ENCODE measurements at regions of chr20 and their contacts with region 1.

Region 1: GRCh38 chr20:62065669-62066338 is at the start of gene TAF4:
- DNase-seq: peak in 1 of 2 experiments; percentile 78
- H3K4me3 ChIP-seq: peak within 1 kb of the TSS; percentile 81
- H3K27ac ChIP-seq: no peak within 1 kb of the TSS
- H3K4me1 ChIP-seq: peaks cover 16% of the 10 kb centered on the region
- H3K27me3 ChIP-seq: peaks cover 6% of the 10 kb centered on the region
- CTCF ChIP-seq: no peak
- total RNA-seq, gene TAF4: 25.8 and 32.5 TPM in 2 replicates

Region 2: GRCh38 chr20:61885759-61886715 is 179.8 kb before region 1 on chr20:
- CTCF ChIA-PET with region 1: no interaction called
- POLR2A ChIA-PET with region 1: interaction called, 18 read pairs
- intact Hi-C with region 1: no loop called
- DNase-seq: no peak
- H3K4me3 ChIP-seq: no peak overlapping the region
- H3K27ac ChIP-seq: no peak overlapping the region
- H3K4me1 ChIP-seq: no peaks in the 10 kb centered on the region
- H3K27me3 ChIP-seq: peaks cover 86% of the 10 kb centered on the region
- CTCF ChIP-seq: no peak

Region 3: DNA sequence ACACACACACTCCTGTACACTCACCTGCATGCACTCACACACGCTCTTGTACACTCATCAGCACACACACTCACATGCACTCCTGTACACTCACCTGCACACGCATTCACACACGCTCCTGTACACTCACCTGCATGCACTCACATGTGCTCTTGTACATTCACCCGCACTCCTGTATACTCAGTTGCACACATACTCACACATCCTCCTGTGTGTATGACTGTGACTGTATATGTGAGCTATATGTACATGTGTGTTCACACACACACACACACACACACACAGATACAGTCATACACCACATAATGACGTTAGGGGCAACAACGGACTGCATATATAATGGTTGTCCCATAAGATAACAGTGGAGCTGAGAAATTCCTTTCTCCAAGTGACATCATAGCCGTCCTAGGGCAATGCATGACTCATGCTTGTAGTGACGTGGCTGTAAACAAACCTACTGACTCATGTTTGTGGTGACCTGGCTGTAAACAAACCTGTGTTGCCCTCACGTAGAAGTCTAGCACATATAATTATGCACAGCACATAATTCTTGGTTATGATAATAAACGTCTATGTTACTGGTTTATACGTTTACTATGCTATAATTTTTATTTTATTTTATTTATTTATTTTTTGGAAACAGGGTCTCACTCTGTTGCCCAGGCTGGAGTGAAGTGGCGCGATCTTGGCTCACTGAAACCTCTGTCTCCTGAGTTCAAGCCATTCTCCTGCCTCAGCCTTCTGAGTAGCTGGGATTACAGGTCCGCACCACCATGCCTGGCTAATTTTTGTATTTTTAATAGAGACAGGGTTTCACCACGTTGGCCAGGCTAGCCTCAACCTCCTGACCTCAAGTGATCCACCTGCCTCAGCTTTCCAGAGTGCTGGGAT is 22.7 kb after region 1 on chr20:
- CTCF ChIA-PET with region 1: no interaction called
- POLR2A ChIA-PET with region 1: interaction called, 10 read pairs
- intact Hi-C with region 1: no loop called
- DNase-seq: peak; percentile 62 to 94
- H3K4me3 ChIP-seq: no peak overlapping the region
- H3K27ac ChIP-seq: no peak overlapping the region
- H3K4me1 ChIP-seq: peaks cover 6% of the 10 kb centered on the region
- H3K27me3 ChIP-seq: peaks cover 63% of the 10 kb centered on the region
- CTCF ChIP-seq: no peak

Region 4: GRCh38 chr20:62121776-62122631 is 56.2 kb after region 1 on chr20 and contains the start of gene LSM14B:
- CTCF ChIA-PET with region 1: no interaction called
- POLR2A ChIA-PET with region 1: no interaction called
- intact Hi-C with region 1: loop called (anchors 1 kb)
- DNase-seq: peak; percentile 86 to 99
- H3K4me3 ChIP-seq: peak within 1 kb of the TSS; percentile 80
- H3K27ac ChIP-seq: peak within 1 kb of the TSS; percentile 95
- H3K4me1 ChIP-seq: peaks cover 15% of the 10 kb centered on the region
- H3K27me3 ChIP-seq: peaks cover 29% of the 10 kb centered on the region
- CTCF ChIP-seq: no peak
- total RNA-seq, gene LSM14B: 61.5 and 67.2 TPM in 2 replicates

Region 5: GRCh38 chr20:62136283-62137091 is 70.7 kb after region 1 on chr20:
- CTCF ChIA-PET with region 1: no interaction called
- POLR2A ChIA-PET with region 1: interaction called, 10 read pairs
- intact Hi-C with region 1: loop called (anchors 5 kb)
- DNase-seq: peak; percentile 64 to 68
- H3K4me3 ChIP-seq: no peak overlapping the region
- H3K27ac ChIP-seq: no peak overlapping the region
- H3K4me1 ChIP-seq: peaks cover 10% of the 10 kb centered on the region
- H3K27me3 ChIP-seq: no peaks in the 10 kb centered on the region
- CTCF ChIP-seq: peak; percentile 92